ENCODE measurements at regions of chrX and their contacts with region 1.

Region 1: GRCh38 chrX:109709129-109709631 is 23.9 kb downstream of the ACSL4 start:
- DNase-seq: no peak
- H3K4me3 Mint-ChIP-seq: peak overlapping the region; percentile 53
- H3K27ac Mint-ChIP-seq: peak overlapping the region; percentile 81
- H3K4me1 Mint-ChIP-seq: peaks cover 54% of the 10 kb centered on the region
- H3K27me3 Mint-ChIP-seq: no peaks in the 10 kb centered on the region

Region 2: DNA sequence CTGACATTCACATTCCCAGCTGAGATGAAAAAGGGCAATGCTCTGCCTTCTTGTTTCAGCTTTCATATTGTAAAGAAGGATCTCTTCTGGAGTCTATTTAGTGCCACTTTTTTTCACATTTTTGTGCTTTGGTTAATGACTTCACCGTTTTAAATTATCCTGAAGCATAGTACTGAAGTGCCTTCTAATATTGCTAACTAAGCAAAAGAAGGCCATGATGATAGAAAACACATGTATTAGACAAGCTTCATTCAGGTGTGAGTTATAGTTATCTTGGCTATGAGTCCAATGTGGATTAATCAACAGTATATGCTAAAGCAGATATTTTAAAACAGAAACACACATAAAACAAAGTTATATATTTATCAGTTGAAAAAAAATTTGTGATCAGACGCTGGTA is 132.1 kb before region 1 on chrX:
- intact Hi-C with region 1: no loop called
- DNase-seq: no peak
- H3K4me3 Mint-ChIP-seq: no peak overlapping the region
- H3K27ac Mint-ChIP-seq: no peak overlapping the region
- H3K4me1 Mint-ChIP-seq: no peaks in the 10 kb centered on the region
- H3K27me3 Mint-ChIP-seq: peaks cover 5% of the 10 kb centered on the region

Region 3: DNA sequence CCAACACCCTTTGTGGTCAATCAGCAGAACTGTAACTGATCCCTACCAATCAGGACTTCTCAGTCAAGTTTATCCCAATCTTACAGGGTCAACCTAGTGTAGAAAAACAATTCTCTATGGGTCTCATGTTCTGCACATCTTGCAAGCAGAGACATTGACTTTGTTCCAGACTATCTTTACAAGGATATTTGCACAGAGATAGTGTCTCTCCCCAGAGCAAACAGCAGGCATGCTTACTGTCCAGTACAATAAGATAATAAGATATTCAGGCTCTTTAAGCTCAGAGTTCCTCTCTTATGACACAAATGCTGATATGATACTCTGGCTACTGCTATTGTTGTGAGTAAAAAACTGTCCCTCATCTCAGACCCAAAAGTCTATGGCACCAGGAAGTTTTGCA is 29.4 kb before region 1 on chrX:
- intact Hi-C with region 1: no loop called
- DNase-seq: no peak
- H3K4me3 Mint-ChIP-seq: no peak overlapping the region
- H3K27ac Mint-ChIP-seq: no peak overlapping the region
- H3K4me1 Mint-ChIP-seq: peaks cover 6% of the 10 kb centered on the region
- H3K27me3 Mint-ChIP-seq: no peaks in the 10 kb centered on the region

Region 4: DNA sequence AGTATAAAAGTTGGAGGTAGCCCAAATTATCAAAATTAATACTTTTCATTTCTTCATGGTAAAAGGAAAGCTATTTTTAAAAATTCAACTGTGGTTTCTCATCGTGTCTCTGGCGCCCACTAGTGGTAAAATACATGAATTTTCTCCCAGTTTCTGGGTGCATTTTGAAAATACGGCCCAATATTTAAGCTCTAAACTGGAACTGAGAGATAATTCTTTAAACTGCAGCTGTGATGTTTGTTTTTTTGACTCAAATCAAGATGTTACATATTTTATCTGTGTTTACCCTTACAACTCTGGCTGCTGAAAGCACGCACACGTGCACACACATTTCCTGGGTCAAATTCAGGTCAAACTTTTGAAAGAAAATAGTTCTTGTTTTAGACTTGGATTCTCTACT is 147.8 kb after region 1 on chrX:
- intact Hi-C with region 1: loop called (anchors 1 kb)
- DNase-seq: peak; percentile 70
- H3K4me3 Mint-ChIP-seq: no peak overlapping the region
- H3K27ac Mint-ChIP-seq: no peak overlapping the region
- H3K4me1 Mint-ChIP-seq: peaks cover 6% of the 10 kb centered on the region
- H3K27me3 Mint-ChIP-seq: no peaks in the 10 kb centered on the region

Region 5: DNA sequence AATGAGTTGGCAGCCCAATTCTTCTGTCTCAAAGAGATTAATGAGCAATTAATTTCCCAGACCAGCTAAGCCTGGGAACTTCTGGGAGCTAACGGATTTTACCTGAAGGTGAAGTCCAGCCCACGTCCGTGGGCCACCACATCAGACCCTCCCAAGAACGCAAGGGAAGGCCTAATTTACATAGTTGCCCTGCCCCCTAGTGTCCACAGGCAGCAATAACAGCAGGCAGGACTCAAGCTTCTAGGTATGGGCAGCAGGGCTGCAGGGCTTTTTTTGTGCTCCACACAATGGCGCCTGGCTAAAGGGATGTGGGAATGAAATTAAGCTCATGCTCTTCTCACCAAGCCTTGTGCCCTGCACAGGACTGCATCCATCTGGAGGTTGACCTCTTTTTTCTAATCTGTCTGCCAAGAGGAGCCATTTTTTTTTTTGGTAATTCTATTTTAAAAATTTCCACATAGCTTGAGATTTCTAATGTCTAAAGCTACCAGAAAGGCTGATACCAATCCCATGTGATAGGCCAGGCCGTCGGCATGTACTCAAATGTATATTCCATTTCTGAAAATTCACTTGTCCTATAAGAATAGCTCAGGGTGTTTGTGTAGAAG is 181.8 kb after region 1 on chrX:
- intact Hi-C with region 1: loop called (anchors 1 kb)
- DNase-seq: peak; percentile 81
- H3K4me3 Mint-ChIP-seq: no peak overlapping the region
- H3K27ac Mint-ChIP-seq: no peak overlapping the region
- H3K4me1 Mint-ChIP-seq: peaks cover 2% of the 10 kb centered on the region
- H3K27me3 Mint-ChIP-seq: peaks cover 7% of the 10 kb centered on the region

Measured in activated CD4-positive, alpha-beta T cell treated with anti-CD3 and anti-CD28 coated beads, Interleukin-2, amount 10 ng/mL, durations not matched to agents 24 days and 14 days (primary cell).